Activated CD8-positive, alpha-beta T cell treated with anti-CD3 and anti-CD28 coated beads for 36 hours (primary cell): ENCODE measurements at regions of chr20 and their contacts with region 1.

Region 1: GRCh38 chr20:9978397-9979004 is 56.3 kb upstream of the ANKEF1 start:
- DNase-seq: peak; percentile 39
- ATAC-seq: peak; percentile 91
- H3K4me3 Mint-ChIP-seq: no peak overlapping the region
- H3K27ac Mint-ChIP-seq: no peak overlapping the region
- H3K4me1 Mint-ChIP-seq: peaks cover 2% of the 10 kb centered on the region
- H3K27me3 Mint-ChIP-seq: peaks cover 1% of the 10 kb centered on the region
- CTCF ChIP-seq: peak; percentile 76

Region 2: GRCh38 chr20:9968015-9968414 is 10.5 kb before region 1 on chr20:
- CTCF ChIA-PET with region 1: interaction called, 17 read pairs
- POLR2A ChIA-PET with region 1: no interaction called
- intact Hi-C with region 1: no loop called
- DNase-seq: no peak
- ATAC-seq: no peak
- H3K4me3 Mint-ChIP-seq: no peak overlapping the region
- H3K27ac Mint-ChIP-seq: no peak overlapping the region
- H3K4me1 Mint-ChIP-seq: no peaks in the 10 kb centered on the region
- H3K27me3 Mint-ChIP-seq: peaks cover 12% of the 10 kb centered on the region
- CTCF ChIP-seq: no peak

Region 3: GRCh38 chr20:10077081-10077471 is 98.6 kb after region 1 on chr20:
- CTCF ChIA-PET with region 1: interaction called, 11 read pairs
- POLR2A ChIA-PET with region 1: no interaction called
- intact Hi-C with region 1: no loop called
- DNase-seq: peak; percentile 4
- ATAC-seq: no peak
- H3K4me3 Mint-ChIP-seq: no peak overlapping the region
- H3K27ac Mint-ChIP-seq: no peak overlapping the region
- H3K4me1 Mint-ChIP-seq: no peaks in the 10 kb centered on the region
- H3K27me3 Mint-ChIP-seq: peaks cover 17% of the 10 kb centered on the region
- CTCF ChIP-seq: peak; percentile 28